HCT116 (cell line): ENCODE measurements at regions of chr18 and their contacts with region 1.

Region 1: DNA sequence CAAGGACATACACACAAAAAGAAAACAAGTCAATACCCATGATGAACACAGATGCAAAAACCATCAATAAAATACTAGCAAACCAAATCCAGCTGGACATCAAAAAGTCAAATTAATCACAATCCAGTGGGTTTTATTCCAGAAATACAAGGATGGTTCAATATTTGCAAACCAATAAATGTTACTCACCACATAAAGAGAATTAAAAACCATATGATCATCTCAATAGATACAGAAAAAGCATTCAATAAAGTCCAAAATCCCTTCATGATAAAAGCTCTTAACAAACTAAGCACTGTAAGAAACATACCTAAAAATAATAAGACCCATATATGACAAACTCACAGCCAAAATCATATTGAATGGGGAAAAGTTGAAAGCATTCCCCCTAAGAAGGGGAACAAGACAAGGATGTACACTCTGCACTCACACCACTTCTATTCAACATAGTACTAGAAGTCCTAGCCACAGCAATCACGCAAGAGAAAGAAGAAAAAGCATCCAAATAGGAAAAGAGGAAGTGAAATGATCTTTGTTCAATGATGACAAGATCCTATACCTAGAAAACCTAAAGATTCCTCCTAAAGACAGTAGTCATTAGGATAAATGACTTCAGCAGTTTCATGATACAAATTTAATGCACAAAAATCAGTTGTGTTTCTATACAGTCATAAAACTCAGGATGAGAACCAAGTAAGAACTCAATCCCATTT is 62.6 kb downstream of the TRAPPC8 start:
- DNase-seq: no peak
- ATAC-seq: no peak
- H3K4me3 ChIP-seq: no peak overlapping the region
- H3K27ac ChIP-seq: no peak overlapping the region
- H3K4me1 ChIP-seq: no peaks in the 10 kb centered on the region
- H3K27me3 ChIP-seq: no peaks in the 10 kb centered on the region
- CTCF ChIP-seq: no peak
- POLR2A ChIP-seq: no peak
- RAD21 ChIP-seq: no peak

Region 2: DNA sequence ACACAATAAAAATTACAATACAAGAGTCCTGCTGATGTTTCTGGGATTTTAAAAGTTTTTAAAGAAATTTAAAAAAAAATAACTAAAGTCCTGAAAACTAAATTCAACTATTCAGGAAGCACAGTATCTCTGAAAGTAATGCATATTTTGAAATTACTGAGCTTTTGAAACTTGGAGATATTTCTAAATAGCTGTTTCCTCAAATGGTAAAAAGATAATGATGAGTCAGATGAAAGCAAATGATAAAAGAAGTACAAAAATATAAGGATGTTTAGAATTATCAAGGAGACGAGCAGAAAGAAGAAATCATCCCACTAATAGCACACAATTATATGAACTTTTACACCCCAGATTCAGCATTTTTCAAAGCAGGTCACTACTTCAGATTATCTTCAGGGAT is 29.5 kb before region 1 on chr18:
- CTCF ChIA-PET with region 1: no interaction called
- POLR2A ChIA-PET with region 1: no interaction called
- RAD21 ChIA-PET with region 1: no interaction called
- intact Hi-C with region 1: loop called (anchors 5 kb)
- DNase-seq: no peak
- ATAC-seq: no peak
- H3K4me3 ChIP-seq: no peak overlapping the region
- H3K27ac ChIP-seq: no peak overlapping the region
- H3K4me1 ChIP-seq: no peaks in the 10 kb centered on the region
- H3K27me3 ChIP-seq: no peaks in the 10 kb centered on the region
- CTCF ChIP-seq: no peak
- POLR2A ChIP-seq: no peak
- RAD21 ChIP-seq: no peak